SK-N-SH (cell line): ENCODE measurements at regions of chr13 and their contacts with region 1.

Region 1: GRCh38 chr13:79423801-79424642 is 18.0 kb upstream of the RBM26 start:
- DNase-seq: peak; percentile 45
- H3K4me3 ChIP-seq: no peak overlapping the region; a peak in 1 of 4 replicates
- H3K27ac ChIP-seq: no peak overlapping the region
- H3K4me1 ChIP-seq: no peaks in the 10 kb centered on the region
- H3K27me3 ChIP-seq: no peaks in the 10 kb centered on the region
- CTCF ChIP-seq: peak; percentile 81
- EP300 ChIP-seq: no peak
- RAD21 ChIP-seq: peak; percentile 80

Region 2: DNA sequence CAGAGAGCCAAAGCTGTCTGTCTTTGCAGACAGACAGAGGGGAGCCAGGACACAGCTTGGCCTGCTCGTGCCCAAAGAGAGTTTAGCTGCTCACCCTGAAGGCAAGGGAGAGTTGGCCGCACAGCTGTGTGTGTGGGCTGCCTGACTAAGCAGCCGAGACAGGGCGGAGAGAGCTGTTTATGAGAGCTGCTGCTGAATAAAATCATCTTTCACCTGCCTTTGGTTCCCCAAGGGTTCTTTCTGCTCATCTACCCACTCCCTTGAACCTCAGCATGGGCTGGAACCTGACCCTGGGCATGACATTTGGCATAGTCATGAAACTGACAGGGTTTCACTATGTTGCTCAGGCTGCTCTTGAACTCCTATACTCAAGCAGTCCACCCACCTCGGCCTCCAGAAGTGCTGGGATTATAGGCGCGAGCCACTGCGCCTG is 116.1 kb before region 1 on chr13:
- CTCF ChIA-PET with region 1: no interaction called
- POLR2A ChIA-PET with region 1: no interaction called
- DNase-seq: no peak
- H3K4me3 ChIP-seq: no peak overlapping the region
- H3K27ac ChIP-seq: no peak overlapping the region
- H3K4me1 ChIP-seq: peaks cover 0 to 7% of the 10 kb centered on the region in 2 experiments; a peak in 2 of 4 replicates
- H3K27me3 ChIP-seq: no peaks in the 10 kb centered on the region
- CTCF ChIP-seq: no peak
- EP300 ChIP-seq: no peak
- RAD21 ChIP-seq: no peak

Region 3: DNA sequence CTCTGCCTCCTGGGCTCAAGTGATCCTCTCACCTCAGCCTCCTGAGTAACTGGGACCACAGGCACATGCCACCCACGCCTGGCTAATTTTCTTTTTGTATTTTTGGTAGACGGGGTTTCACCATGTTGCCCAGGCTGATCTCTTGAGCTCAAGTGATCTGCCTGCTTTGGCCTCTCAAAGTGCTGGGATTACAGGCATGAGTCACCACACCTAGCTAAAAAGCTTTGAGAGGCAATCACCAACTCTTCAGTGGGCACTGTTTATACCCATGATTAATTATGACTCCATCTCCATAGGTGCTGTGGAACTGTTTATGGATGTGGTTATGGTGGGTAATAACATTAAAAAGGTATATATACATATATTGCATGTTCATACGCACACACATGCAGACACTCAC is 10.5 kb before region 1 on chr13:
- CTCF ChIA-PET with region 1: interaction called, 20 read pairs
- POLR2A ChIA-PET with region 1: no interaction called
- DNase-seq: no peak
- H3K4me3 ChIP-seq: no peak overlapping the region
- H3K27ac ChIP-seq: no peak overlapping the region
- H3K4me1 ChIP-seq: no peaks in the 10 kb centered on the region
- H3K27me3 ChIP-seq: no peaks in the 10 kb centered on the region
- CTCF ChIP-seq: no peak
- EP300 ChIP-seq: no peak
- RAD21 ChIP-seq: no peak

Region 4: DNA sequence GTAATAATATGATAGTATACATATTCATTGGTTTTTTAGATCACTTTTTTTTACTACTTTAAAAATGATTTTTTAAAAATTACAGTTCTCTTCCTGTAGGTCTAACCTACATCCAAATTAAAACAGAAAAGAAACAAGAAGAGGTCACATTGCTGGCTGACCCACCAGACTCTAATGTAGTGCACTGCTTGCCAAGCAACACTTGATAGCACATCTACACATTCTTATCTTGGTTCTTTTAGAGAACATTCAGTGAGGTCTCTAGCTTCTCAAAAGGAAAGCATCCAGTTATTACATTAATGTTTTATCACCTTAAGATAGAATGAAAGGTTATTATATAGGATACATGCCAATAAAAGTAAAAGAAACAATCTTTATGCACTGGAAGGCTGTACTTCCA is 92.6 kb after region 1 on chr13:
- CTCF ChIA-PET with region 1: interaction called, 11 read pairs
- POLR2A ChIA-PET with region 1: no interaction called
- DNase-seq: no peak
- H3K4me3 ChIP-seq: no peak overlapping the region
- H3K27ac ChIP-seq: no peak overlapping the region
- H3K4me1 ChIP-seq: no peaks in the 10 kb centered on the region
- H3K27me3 ChIP-seq: no peaks in the 10 kb centered on the region
- CTCF ChIP-seq: no peak
- EP300 ChIP-seq: no peak
- RAD21 ChIP-seq: no peak

Region 5: GRCh38 chr13:79533781-79534400 is 109.9 kb after region 1 on chr13:
- CTCF ChIA-PET with region 1: interaction called, 99 read pairs
- POLR2A ChIA-PET with region 1: no interaction called
- DNase-seq: no peak
- H3K4me3 ChIP-seq: no peak overlapping the region
- H3K27ac ChIP-seq: 0 out of 4 replicates have a peak overlapping the region, but pooled peaks of 1 of the 2 experiments have one; percentile 13
- H3K4me1 ChIP-seq: peaks cover 0 to 6% of the 10 kb centered on the region in 2 experiments; a peak in 2 of 4 replicates
- H3K27me3 ChIP-seq: no peaks in the 10 kb centered on the region
- CTCF ChIP-seq: no peak
- EP300 ChIP-seq: no peak
- RAD21 ChIP-seq: no peak

Region 6: GRCh38 chr13:79547211-79548195 is 123.5 kb after region 1 on chr13:
- CTCF ChIA-PET with region 1: interaction called, 45 read pairs
- POLR2A ChIA-PET with region 1: no interaction called
- DNase-seq: no peak
- H3K4me3 ChIP-seq: no peak overlapping the region
- H3K27ac ChIP-seq: peak overlapping the region in 1 of 2 experiments; percentile 43; a peak in 2 of 4 replicates
- H3K4me1 ChIP-seq: peaks cover 7 to 29% of the 10 kb centered on the region in 2 experiments; a peak in 3 of 4 replicates
- H3K27me3 ChIP-seq: no peaks in the 10 kb centered on the region
- CTCF ChIP-seq: no peak
- EP300 ChIP-seq: no peak
- RAD21 ChIP-seq: no peak

Region 7: DNA sequence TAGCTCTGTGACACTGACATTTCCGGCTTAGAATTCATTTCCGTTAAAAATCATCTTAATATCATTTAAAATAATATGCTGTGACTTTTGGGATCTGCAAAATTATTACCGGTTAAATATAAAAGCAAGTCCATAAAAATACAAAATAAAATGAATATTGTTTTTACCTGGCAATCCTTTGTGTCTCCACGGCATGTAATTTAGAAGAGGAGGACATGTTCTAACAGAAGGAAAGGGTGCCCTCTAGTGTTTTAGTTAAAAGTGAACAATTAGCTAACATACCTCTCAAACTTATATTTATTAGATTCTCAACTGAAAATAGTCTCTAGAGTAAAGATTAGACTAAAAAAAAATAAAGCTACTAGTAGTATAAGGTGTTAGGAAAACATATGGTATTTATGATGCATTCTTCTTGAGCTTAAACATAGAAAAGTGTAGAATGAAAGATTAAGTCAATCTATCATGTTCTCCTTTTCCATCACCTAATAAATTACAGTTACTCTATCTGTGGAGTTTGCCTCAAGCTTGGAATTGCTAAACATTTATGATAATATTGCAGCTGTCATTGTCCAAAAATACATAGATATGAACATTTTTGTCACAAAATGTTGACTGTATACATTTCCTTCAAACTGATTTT is 1593.6 kb after region 1 on chr13:
- CTCF ChIA-PET with region 1: interaction called, 15 read pairs
- POLR2A ChIA-PET with region 1: no interaction called
- DNase-seq: peak; percentile 44
- H3K4me3 ChIP-seq: no peak overlapping the region
- H3K27ac ChIP-seq: no peak overlapping the region
- H3K4me1 ChIP-seq: peaks cover 0 to 3% of the 10 kb centered on the region in 2 experiments; a peak in 2 of 4 replicates
- H3K27me3 ChIP-seq: no peaks in the 10 kb centered on the region
- CTCF ChIP-seq: peak; percentile 81
- EP300 ChIP-seq: no peak
- RAD21 ChIP-seq: peak; percentile 85